ENCODE measurements at regions of chr10 and their contacts with region 1.

Region 1: DNA sequence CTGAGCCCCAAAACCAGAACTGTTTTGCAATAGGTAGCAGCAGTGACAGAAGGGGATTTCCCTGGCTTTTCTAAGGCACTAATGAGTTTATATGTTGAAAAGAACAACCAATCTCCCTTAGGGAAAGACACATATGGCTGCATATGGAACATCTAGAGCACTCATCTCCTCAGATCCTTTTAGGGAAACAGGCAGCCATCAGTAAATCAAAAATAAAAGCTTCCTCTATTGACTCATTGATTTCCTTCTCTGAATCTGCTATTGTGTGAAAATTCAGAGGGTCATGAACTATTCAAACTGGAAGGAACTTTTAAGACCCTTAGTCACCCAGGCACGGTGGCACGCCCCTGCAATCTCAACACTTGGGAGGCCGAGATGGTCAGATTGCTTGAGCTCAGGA is 110.9 kb upstream of the NANOS1 start:
- DNase-seq: peak; percentile 16
- H3K4me3 ChIP-seq: no peak overlapping the region
- H3K27ac ChIP-seq: no peak overlapping the region
- H3K4me1 ChIP-seq: peaks cover 11% of the 10 kb centered on the region
- H3K27me3 ChIP-seq: peaks cover 17% of the 10 kb centered on the region
- CTCF ChIP-seq: no peak

Region 2: GRCh38 chr10:117796130-117796745 is 1122.3 kb before region 1 on chr10:
- CTCF ChIA-PET with region 1: interaction called, 19 read pairs
- POLR2A ChIA-PET with region 1: no interaction called
- intact Hi-C with region 1: no loop called
- DNase-seq: no peak
- H3K4me3 ChIP-seq: no peak overlapping the region
- H3K27ac ChIP-seq: no peak overlapping the region
- H3K4me1 ChIP-seq: no peaks in the 10 kb centered on the region
- H3K27me3 ChIP-seq: peaks cover 76% of the 10 kb centered on the region
- CTCF ChIP-seq: no peak

Region 3: DNA sequence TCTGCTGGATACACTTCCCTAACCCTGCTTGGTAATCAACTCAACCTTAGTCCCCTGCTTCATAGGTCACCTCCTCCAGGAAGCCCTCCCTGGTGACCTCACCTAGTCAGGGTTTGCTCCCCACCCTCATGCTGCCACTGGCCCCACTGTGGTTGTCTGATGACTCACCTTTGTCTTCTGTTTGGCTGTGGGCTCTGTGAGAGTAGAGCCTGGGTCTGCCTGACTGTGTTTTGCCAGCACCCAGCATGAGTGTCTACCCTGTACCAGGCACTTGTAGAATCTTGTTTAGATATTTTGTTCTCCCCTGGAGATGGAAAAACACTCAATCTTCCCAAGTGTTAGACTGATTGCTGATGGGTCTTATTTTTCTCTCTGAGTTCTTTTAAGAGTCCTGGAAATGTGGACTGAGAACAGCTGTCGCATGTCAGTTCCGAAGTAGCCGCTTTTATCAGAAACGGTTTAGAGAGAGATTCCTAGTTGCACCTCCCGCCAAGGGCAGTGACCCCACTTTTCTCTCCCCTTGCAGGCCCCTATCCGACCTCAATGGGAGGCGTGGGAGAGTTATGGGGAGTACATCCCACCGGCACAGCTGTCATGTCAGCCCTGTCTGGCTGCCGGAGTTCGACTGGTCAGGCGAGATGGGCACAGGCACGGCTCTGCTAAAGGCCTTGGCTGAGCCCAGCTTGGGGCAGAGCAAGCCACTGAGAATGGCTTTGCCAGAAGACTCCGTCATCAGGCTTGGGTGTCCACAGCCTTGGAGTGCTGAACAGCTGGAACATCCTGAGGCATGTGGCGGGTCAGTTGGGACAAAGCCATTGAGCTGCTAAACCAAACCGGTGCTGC is 423.1 kb after region 1 on chr10:
- CTCF ChIA-PET with region 1: no interaction called
- POLR2A ChIA-PET with region 1: no interaction called
- intact Hi-C with region 1: no loop called
- DNase-seq: no peak
- H3K4me3 ChIP-seq: no peak overlapping the region
- H3K27ac ChIP-seq: peak overlapping the region; percentile 86
- H3K4me1 ChIP-seq: peaks cover 71% of the 10 kb centered on the region
- H3K27me3 ChIP-seq: no peaks in the 10 kb centered on the region
- CTCF ChIP-seq: no peak

Measured in A673 (cell line).